Activated naive CD4-positive, alpha-beta T cell treated with anti-CD3 and anti-CD28 coated beads for 36 hours (primary cell): ENCODE measurements at regions of chr13 and their contacts with region 1.

Region 1: DNA sequence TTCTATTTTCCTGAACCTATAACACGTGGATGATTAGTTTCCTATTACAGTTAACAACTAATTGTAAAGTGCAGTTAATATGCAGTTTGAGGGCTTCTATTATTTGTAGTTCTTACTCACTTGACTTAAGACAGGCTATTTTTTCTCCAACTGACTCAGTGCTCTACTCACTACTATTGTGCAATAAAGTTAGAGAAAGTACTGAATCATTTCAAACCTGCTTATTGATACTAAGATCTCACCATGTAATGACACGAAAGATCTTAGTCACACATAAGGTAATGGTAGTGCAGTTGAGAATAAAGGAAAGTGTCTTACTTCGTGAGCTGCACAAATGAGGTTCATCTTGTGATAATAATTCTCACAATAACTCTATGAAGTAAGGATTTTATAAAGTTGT is 22.8 kb upstream of the ITM2B start:
- DNase-seq: no peak
- H3K4me3 Mint-ChIP-seq: no peak overlapping the region
- H3K27ac Mint-ChIP-seq: no peak overlapping the region
- H3K4me1 Mint-ChIP-seq: peaks cover 26% of the 10 kb centered on the region
- H3K27me3 Mint-ChIP-seq: no peaks in the 10 kb centered on the region

Region 2: DNA sequence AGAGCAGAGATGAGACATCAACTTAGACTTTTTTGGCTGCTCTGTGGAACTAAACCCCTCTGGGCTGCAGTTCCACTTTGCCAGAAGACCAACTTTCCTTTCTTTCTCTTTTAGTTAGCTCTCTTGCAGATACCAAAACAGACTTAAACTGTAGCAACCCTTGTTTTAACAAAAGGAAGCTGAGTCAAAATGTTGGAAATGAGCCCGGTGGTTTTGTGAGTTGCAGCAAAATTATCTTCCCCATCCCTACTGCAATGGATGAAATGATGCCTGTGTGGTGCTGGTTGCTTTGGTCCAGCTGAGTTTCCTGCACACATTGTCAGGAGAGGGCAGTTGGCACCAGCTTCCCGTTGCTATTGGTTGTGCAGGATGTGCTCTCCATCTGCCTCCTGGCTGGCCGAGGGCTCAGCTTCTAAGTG is 1541.9 kb before region 1 on chr13:
- CTCF ChIA-PET with region 1: no interaction called
- intact Hi-C with region 1: loop called (anchors 10 kb)
- DNase-seq: peak; percentile 58
- H3K4me3 Mint-ChIP-seq: peak overlapping the region; percentile 72
- H3K27ac Mint-ChIP-seq: peak overlapping the region; percentile 85
- H3K4me1 Mint-ChIP-seq: peaks cover 37% of the 10 kb centered on the region
- H3K27me3 Mint-ChIP-seq: no peaks in the 10 kb centered on the region

Region 3: DNA sequence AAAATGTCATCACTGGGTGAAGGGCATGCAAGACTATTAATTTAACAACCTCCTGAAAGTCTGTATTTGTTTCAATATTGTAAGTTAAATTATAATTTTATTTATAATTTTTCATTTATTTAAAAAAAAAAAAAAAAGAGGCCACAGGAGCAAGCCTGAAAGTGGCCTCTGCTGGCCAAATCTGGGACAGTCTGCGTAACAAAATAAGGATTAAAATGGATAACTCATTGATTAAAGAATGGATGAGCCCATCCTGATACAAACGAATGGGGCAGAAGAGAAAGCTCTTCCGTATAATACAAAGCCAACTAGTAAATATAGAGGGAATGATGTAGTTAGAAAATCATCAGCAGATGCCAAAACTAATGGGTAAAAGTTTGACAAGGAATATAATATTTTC is 245.3 kb before region 1 on chr13:
- CTCF ChIA-PET with region 1: no interaction called
- intact Hi-C with region 1: no loop called
- DNase-seq: no peak
- H3K4me3 Mint-ChIP-seq: no peak overlapping the region
- H3K27ac Mint-ChIP-seq: no peak overlapping the region
- H3K4me1 Mint-ChIP-seq: no peaks in the 10 kb centered on the region
- H3K27me3 Mint-ChIP-seq: no peaks in the 10 kb centered on the region

Region 4: DNA sequence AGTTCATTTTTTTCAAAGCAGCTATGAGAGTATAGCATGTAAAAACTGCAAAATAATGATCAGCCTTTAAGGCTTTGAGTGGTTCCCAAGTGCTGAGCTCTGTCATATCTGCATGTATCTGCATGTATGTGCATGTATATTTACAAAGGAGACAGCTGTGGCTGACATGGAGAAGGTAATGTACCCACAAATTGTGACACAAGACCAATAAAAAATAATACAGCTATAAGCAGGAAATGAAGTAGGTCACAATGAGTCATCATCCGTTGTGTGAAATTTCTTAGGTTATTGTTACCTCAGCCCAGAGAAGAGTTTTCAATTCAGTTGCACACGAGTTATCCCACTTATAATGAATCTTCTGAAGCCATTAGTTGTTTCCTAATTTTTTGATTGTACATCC is 54.3 kb before region 1 on chr13:
- CTCF ChIA-PET with region 1: no interaction called
- intact Hi-C with region 1: loop called (anchors 1 kb)
- DNase-seq: peak; percentile 44
- H3K4me3 Mint-ChIP-seq: peak overlapping the region; percentile 74
- H3K27ac Mint-ChIP-seq: peak overlapping the region; percentile 99
- H3K4me1 Mint-ChIP-seq: peaks cover 85% of the 10 kb centered on the region
- H3K27me3 Mint-ChIP-seq: no peaks in the 10 kb centered on the region

Region 5: GRCh38 chr13:48194379-48194754 is 15.8 kb before region 1 on chr13:
- CTCF ChIA-PET with region 1: interaction called, 3 read pairs
- intact Hi-C with region 1: loop called (anchors 1 kb)
- DNase-seq: peak; percentile 10
- H3K4me3 Mint-ChIP-seq: no peak overlapping the region
- H3K27ac Mint-ChIP-seq: no peak overlapping the region
- H3K4me1 Mint-ChIP-seq: peaks cover 41% of the 10 kb centered on the region
- H3K27me3 Mint-ChIP-seq: no peaks in the 10 kb centered on the region

Region 6: DNA sequence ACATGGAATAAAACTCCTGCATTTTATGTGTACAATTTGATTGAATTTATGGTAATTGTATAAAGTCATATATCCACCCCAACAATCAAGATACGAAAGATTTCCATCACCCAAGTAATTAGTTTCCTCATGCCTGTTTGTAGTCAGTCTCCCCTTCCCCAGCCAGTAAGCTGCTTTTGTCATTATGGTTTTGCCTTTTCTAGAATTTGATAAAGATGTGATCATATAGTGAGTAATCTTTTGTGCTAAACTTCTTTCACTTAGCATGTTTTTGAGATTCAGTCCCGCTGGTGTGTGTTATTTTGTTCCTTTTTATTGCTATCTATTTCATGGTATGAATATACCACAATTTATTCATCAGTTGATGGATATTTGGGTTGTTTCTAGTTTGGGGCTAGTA is 38.8 kb after region 1 on chr13:
- CTCF ChIA-PET with region 1: no interaction called
- intact Hi-C with region 1: loop called (anchors 1 kb)
- DNase-seq: no peak
- H3K4me3 Mint-ChIP-seq: peak overlapping the region; percentile 16
- H3K27ac Mint-ChIP-seq: peak overlapping the region; percentile 81
- H3K4me1 Mint-ChIP-seq: peaks cover 72% of the 10 kb centered on the region
- H3K27me3 Mint-ChIP-seq: no peaks in the 10 kb centered on the region

Region 7: DNA sequence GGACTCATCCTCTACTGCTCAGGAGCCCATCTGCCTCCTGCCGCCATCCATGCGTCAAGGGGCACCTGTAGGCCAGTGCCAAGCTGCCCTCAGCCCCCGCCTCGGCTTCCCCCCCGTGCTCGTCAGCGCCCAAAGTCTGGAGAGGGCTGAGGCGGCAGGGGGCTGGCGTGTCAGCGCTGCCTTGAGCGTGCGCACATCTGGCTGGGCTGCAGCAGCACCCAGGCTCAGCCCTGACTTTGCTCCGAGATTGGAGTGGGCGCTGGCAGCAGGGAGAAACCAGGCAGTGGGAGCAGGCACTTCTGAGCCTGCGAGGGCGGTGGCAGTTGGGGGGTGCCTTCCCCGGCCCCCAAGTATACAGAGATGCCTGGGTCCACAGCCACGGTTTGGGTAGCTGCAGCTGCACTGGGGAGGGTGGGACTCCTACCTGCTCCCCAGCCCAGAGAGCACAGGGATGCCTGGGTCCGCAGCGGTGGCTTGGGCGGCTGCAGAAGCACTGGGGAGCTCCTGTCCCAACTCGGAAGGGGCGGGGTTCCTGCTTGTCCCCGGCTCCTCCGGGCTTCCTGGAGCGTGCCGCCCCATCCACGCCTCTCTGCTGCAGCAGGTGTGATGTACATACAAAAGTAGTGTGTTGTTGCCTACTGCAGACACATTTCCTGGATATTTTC is 247.5 kb after region 1 on chr13:
- CTCF ChIA-PET with region 1: no interaction called
- intact Hi-C with region 1: no loop called
- DNase-seq: no peak
- H3K4me3 Mint-ChIP-seq: no peak overlapping the region
- H3K27ac Mint-ChIP-seq: no peak overlapping the region
- H3K4me1 Mint-ChIP-seq: peaks cover 4% of the 10 kb centered on the region
- H3K27me3 Mint-ChIP-seq: no peaks in the 10 kb centered on the region

Region 8: GRCh38 chr13:48505597-48506091 is 295.5 kb after region 1 on chr13:
- CTCF ChIA-PET with region 1: no interaction called
- intact Hi-C with region 1: loop called (anchors 1 kb)
- DNase-seq: peak; percentile 70
- H3K4me3 Mint-ChIP-seq: peak overlapping the region; percentile 59
- H3K27ac Mint-ChIP-seq: peak overlapping the region; percentile 75
- H3K4me1 Mint-ChIP-seq: peaks cover 56% of the 10 kb centered on the region
- H3K27me3 Mint-ChIP-seq: no peaks in the 10 kb centered on the region

Region 9: DNA sequence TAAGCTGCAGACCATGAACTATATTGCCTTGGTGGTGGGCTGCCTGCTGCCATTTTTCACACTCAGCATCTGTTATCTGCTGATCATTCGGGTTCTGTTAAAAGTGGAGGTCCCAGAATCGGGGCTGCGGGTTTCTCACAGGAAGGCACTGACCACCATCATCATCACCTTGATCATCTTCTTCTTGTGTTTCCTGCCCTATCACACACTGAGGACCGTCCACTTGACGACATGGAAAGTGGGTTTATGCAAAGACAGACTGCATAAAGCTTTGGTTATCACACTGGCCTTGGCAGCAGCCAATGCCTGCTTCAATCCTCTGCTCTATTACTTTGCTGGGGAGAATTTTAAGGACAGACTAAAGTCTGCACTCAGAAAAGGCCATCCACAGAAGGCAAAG is 497.2 kb after region 1 on chr13:
- CTCF ChIA-PET with region 1: no interaction called
- intact Hi-C with region 1: no loop called
- DNase-seq: no peak
- H3K4me3 Mint-ChIP-seq: no peak overlapping the region
- H3K27ac Mint-ChIP-seq: no peak overlapping the region
- H3K4me1 Mint-ChIP-seq: peaks cover 11% of the 10 kb centered on the region
- H3K27me3 Mint-ChIP-seq: no peaks in the 10 kb centered on the region

Region 10: DNA sequence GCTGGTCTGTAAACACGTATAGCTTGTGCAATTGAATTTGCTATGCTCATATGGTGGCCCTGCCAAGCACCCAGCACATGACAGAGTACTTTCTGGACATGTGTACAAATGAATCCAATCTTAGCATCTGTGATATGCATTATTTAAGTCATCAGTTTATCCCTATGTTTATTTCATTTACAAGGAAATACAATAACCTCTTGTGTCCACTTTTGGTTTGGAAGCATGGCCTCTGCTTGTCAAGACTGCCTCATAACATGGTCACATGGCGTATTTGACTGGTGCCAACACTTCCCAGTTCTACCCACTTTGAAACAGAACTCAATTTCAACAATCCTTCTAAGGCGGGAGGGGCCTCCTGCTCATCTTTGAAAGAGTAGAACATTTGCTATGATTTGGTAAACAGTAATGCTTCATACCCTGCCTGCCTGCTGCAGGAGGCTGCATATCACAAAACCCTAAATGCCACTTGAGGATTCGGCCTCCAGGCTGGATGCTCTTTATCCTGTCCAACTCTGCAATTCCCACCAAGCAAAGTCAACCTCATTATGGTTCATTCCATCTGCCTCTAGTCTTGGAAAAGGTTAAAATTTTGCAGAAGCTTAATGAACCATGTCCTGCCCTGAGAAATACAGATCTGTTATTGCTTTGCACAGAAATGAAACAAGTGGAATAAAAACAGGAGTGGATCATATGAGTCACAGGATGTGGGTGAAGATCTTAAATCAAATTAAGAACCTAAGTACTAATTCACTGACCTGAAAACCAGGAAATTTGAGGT is 594.8 kb after region 1 on chr13:
- CTCF ChIA-PET with region 1: no interaction called
- intact Hi-C with region 1: loop called (anchors 10 kb)
- DNase-seq: peak; percentile 9
- H3K4me3 Mint-ChIP-seq: no peak overlapping the region
- H3K27ac Mint-ChIP-seq: no peak overlapping the region
- H3K4me1 Mint-ChIP-seq: peaks cover 27% of the 10 kb centered on the region
- H3K27me3 Mint-ChIP-seq: no peaks in the 10 kb centered on the region